ENCODE measurements at regions of chrX and their contacts with region 1.

Region 1: DNA sequence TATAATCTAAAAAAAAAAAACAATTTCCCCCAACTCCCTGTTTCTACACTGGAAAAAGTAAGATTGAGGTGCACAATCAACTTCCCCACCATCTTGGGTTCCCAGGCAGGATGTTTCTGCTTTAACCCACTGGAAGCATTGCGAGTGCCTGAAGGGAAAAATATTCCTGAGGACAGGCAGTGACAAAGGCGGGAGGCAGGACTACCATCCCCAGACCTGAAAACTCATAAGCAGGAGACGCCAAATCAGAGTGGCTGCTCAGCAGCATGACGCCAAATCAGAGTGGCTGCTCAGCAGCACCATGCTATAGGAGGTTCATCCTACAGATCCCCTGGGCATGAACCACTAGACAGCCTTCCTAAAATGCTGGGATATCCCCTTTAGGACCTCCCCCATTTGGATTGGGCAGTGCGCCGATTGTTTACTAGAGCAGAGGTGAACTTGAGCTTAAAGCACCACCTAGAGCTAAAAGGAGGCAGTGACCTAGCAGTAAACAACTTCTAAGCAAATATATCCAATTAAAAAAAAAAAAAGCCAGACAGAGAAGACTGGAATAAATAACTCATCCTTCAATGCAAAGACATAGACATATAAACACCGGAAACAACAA is 35.0 kb upstream of the GK start:
- DNase-seq: peak; percentile 31
- ATAC-seq: no peak; the same call in 1 of the 2 replicates
- H3K4me3 ChIP-seq: no peak overlapping the region
- H3K27ac ChIP-seq: no peak overlapping the region
- H3K4me1 ChIP-seq: peaks cover 23% of the 10 kb centered on the region
- H3K27me3 ChIP-seq: no peaks in the 10 kb centered on the region
- CTCF ChIP-seq: peak; percentile 53; the same call in 1 of the 2 replicates

Region 2: GRCh38 chrX:30388325-30388724 is 229.9 kb before region 1 on chrX:
- CTCF ChIA-PET with region 1: no interaction called
- POLR2A ChIA-PET with region 1: no interaction called
- intact Hi-C with region 1: no loop called
- DNase-seq: no peak
- ATAC-seq: no peak
- H3K4me3 ChIP-seq: no peak overlapping the region
- H3K27ac ChIP-seq: no peak overlapping the region
- H3K4me1 ChIP-seq: no peaks in the 10 kb centered on the region
- H3K27me3 ChIP-seq: peaks cover 31% of the 10 kb centered on the region
- CTCF ChIP-seq: no peak

Region 3: GRCh38 chrX:30570505-30570904 is 47.8 kb before region 1 on chrX:
- CTCF ChIA-PET with region 1: interaction called, 6 read pairs
- POLR2A ChIA-PET with region 1: no interaction called
- intact Hi-C with region 1: loop called (anchors 1 kb)
- DNase-seq: peak; percentile 58
- ATAC-seq: no peak
- H3K4me3 ChIP-seq: no peak overlapping the region
- H3K27ac ChIP-seq: no peak overlapping the region
- H3K4me1 ChIP-seq: peaks cover 13% of the 10 kb centered on the region
- H3K27me3 ChIP-seq: no peaks in the 10 kb centered on the region
- CTCF ChIP-seq: peak; percentile 46; the same call in 1 of the 2 replicates

Measured in PC-3 (cell line).